ENCODE measurements at regions of chr10 and their contacts with region 1.

Region 1: GRCh38 chr10:86155054-86155921 is 211.3 kb downstream of the GRID1 start:
- DNase-seq: no peak
- H3K4me3 ChIP-seq: no peak overlapping the region
- H3K27ac ChIP-seq: no peak overlapping the region
- H3K4me1 ChIP-seq: no peaks in the 10 kb centered on the region
- H3K27me3 ChIP-seq: no peaks in the 10 kb centered on the region
- CTCF ChIP-seq: no peak
- POLR2A ChIP-seq: no peak

Region 2: GRCh38 chr10:86371691-86372090 is 216.4 kb after region 1 on chr10:
- intact Hi-C with region 1: loop called (anchors 5 kb)
- DNase-seq: peak in 1 of 2 donors; percentile 20
- H3K4me3 ChIP-seq: no peak overlapping the region
- H3K27ac ChIP-seq: no peak overlapping the region
- H3K4me1 ChIP-seq: peaks cover under 1 to 7% of the 10 kb centered on the region in 2 donors
- H3K27me3 ChIP-seq: peaks cover 0 to 14% of the 10 kb centered on the region in 2 donors
- CTCF ChIP-seq: no peak
- POLR2A ChIP-seq: no peak

Measured in breast epithelium (tissue), 4 donors.